HCT116 (cell line): ENCODE measurements at regions of chr11 and their contacts with region 1.

Region 1: GRCh38 chr11:8688414-8689362 is 6.1 kb downstream of the RPL27A start:
- DNase-seq: peak; percentile 97
- ATAC-seq: peak; percentile 86
- H3K4me3 ChIP-seq: peak overlapping the region; percentile 63
- H3K27ac ChIP-seq: peak overlapping the region; percentile 97
- H3K4me1 ChIP-seq: peaks cover 27 to 59% of the 10 kb centered on the region in 2 experiments
- H3K27me3 ChIP-seq: no peaks in the 10 kb centered on the region
- CTCF ChIP-seq: peak in 1 of 3 experiments; percentile 13; a peak in 2 of 6 replicates
- POLR2A ChIP-seq: peak; percentile 90
- RAD21 ChIP-seq: no peak

Region 2: GRCh38 chr11:8699903-8700302 is 11.2 kb after region 1 on chr11:
- CTCF ChIA-PET with region 1: no interaction called
- POLR2A ChIA-PET with region 1: interaction called, 13 read pairs
- RAD21 ChIA-PET with region 1: no interaction called
- intact Hi-C with region 1: no loop called
- DNase-seq: no peak
- ATAC-seq: peak; percentile 89
- H3K4me3 ChIP-seq: no peak overlapping the region; a peak in 1 of 4 replicates
- H3K27ac ChIP-seq: peak overlapping the region; percentile 49
- H3K4me1 ChIP-seq: peaks cover 16 to 25% of the 10 kb centered on the region in 2 experiments
- H3K27me3 ChIP-seq: no peaks in the 10 kb centered on the region
- CTCF ChIP-seq: no peak
- POLR2A ChIP-seq: no peak
- RAD21 ChIP-seq: peak; percentile 23; the same call in 1 of the 2 replicates

Region 3: DNA sequence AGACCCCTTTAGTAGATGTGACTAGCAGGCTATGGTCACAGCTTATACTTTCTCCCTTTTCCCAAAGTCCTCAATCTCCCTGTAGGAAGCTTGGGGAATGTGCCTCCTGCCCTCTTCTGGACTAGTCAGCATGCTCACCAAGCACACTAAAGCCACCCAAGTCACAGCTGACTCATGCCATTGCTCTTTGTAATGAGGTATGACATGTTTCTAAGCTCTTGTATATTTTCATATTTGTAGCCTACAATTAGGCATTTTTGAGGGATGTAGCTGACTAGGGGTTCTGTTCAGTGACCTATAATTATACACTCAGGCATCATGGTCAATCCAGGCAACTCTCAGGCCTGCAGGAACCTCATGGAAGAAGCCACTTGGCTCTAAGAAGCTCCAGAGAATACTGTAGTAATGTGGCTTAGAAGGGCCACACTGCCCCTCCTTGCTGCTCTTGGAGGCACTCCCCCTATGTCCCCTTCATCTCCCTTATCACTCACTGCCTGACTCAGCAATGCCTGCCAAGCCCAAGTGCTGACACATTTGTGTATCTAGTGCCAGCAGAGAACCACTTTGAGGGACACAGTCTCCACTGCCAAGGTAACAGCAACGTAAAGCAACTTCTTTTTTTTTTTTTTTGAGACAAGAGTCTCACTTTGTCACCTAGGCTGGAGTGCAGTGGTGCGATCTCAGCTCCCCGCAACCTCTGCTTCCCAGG is 80.1 kb after region 1 on chr11:
- CTCF ChIA-PET with region 1: interaction called, 12 read pairs
- POLR2A ChIA-PET with region 1: interaction called, 22 read pairs
- RAD21 ChIA-PET with region 1: interaction called in 1 of 2 experiments, 3 read pairs
- intact Hi-C with region 1: loop called (anchors 2 kb)
- DNase-seq: peak; percentile 72
- ATAC-seq: peak; percentile 73
- H3K4me3 ChIP-seq: no peak overlapping the region; a peak in 1 of 4 replicates
- H3K27ac ChIP-seq: peak overlapping the region; percentile 66; the same call in 1 of the 2 replicates
- H3K4me1 ChIP-seq: peaks cover 29 to 60% of the 10 kb centered on the region in 2 experiments
- H3K27me3 ChIP-seq: no peaks in the 10 kb centered on the region
- CTCF ChIP-seq: peak; percentile 34 to 51 (median 42); a peak in 5 of 6 replicates
- POLR2A ChIP-seq: no peak
- RAD21 ChIP-seq: peak; percentile 90

Region 4: GRCh38 chr11:8794677-8795103 is 106.0 kb after region 1 on chr11:
- CTCF ChIA-PET with region 1: interaction called, 3 read pairs
- POLR2A ChIA-PET with region 1: no interaction called
- RAD21 ChIA-PET with region 1: no interaction called
- intact Hi-C with region 1: loop called (anchors 1 kb)
- DNase-seq: peak; percentile 12
- ATAC-seq: peak; percentile 92
- H3K4me3 ChIP-seq: no peak overlapping the region
- H3K27ac ChIP-seq: no peak overlapping the region
- H3K4me1 ChIP-seq: peaks cover 12 to 14% of the 10 kb centered on the region in 2 experiments; a peak in 3 of 4 replicates
- H3K27me3 ChIP-seq: no peaks in the 10 kb centered on the region
- CTCF ChIP-seq: peak; percentile 30 to 72 (median 69); a peak in 5 of 6 replicates
- POLR2A ChIP-seq: no peak
- RAD21 ChIP-seq: peak; percentile 66

Region 5: GRCh38 chr11:8813658-8814057 is 125.0 kb after region 1 on chr11:
- CTCF ChIA-PET with region 1: no interaction called
- POLR2A ChIA-PET with region 1: interaction called, 12 read pairs
- RAD21 ChIA-PET with region 1: no interaction called
- intact Hi-C with region 1: loop called (anchors 1 kb)
- DNase-seq: peak; percentile 73
- ATAC-seq: peak; percentile 97
- H3K4me3 ChIP-seq: no peak overlapping the region
- H3K27ac ChIP-seq: no peak overlapping the region
- H3K4me1 ChIP-seq: peaks cover 0 to 17% of the 10 kb centered on the region in 2 experiments; a peak in 3 of 4 replicates
- H3K27me3 ChIP-seq: no peaks in the 10 kb centered on the region
- CTCF ChIP-seq: peak; percentile 82 to 97 (median 95)
- POLR2A ChIP-seq: no peak
- RAD21 ChIP-seq: peak; percentile 93

Region 6: DNA sequence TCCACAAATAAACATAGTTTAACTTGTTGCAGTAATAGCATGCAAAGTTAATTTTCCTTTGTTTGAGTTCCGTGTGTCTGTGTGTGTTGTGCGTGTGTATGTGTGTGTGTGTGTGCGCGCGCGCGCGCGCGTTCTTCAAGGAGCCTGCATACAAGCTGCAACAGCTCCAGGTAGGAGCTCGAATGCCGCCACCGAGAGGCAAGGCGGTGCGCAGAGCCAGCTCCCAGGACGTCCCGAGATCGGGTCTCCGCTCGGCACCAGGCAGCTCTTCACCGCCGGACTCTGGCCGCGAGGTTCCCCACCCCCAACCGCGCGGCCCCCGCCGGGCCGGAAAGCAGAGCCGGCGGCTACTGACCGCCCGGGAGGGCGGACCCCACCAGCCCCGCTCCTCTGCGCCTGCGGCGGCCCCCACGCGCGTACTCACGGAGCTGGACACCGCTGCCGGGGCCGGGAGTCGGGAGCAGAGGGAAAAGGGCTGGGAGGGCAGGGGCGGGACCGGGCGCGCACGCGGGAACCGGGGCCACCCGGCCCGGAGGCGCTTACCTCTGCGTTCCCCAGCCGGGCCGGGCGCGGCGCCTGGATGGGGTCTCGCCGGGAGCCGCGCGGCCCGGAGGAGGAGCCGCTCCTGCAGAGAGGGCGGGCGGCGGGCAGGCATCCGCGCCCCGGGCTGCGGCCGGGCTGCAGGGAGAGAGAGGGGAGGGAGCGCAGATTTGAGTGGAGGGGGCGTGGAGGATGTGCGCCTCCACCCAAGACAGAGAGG is 181.9 kb after region 1 on chr11:
- CTCF ChIA-PET with region 1: interaction called, 3 read pairs
- POLR2A ChIA-PET with region 1: interaction called, 6 read pairs
- RAD21 ChIA-PET with region 1: no interaction called
- intact Hi-C with region 1: loop called (anchors 5 kb)
- DNase-seq: peak; percentile 68
- ATAC-seq: peak; percentile 85
- H3K4me3 ChIP-seq: peak overlapping the region; percentile 52 to 63
- H3K27ac ChIP-seq: peak overlapping the region; percentile 59
- H3K4me1 ChIP-seq: peaks cover 8 to 24% of the 10 kb centered on the region in 2 experiments
- H3K27me3 ChIP-seq: no peaks in the 10 kb centered on the region
- CTCF ChIP-seq: no peak
- POLR2A ChIP-seq: no peak
- RAD21 ChIP-seq: peak; percentile 46